Mucosa of descending colon (tissue), 3 donors: ENCODE measurements at regions of chr7 and their contacts with region 1.

Region 1: GRCh38 chr7:116809636-116810266 is 52.6 kb upstream of the CAPZA2 start:
- DNase-seq: peak in 1 of 3 donors; percentile 72
- ATAC-seq: peak; percentile 74
- H3K4me3 ChIP-seq: no peak overlapping the region
- H3K4me1 ChIP-seq: peaks cover 25% of the 10 kb centered on the region
- CTCF ChIP-seq: peak; percentile 37

Region 2: DNA sequence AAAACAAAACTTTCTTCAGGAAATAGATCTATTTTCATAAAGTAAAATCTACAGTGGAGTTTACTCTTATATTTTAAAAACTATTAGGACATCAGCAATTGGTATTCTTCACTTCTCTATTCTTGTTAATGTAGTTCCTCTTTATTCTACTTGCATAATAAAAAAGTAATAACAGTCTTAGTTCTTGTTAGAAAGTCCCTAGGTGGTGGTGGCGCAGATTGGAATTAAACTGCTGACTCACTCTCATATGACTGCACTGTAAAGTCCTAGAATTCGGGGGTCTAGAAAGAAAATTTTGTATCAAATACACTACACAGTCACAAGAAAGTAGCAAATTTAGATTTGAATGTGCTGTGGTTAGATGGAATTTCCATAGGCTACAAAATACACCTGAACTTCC is 644.0 kb before region 1 on chr7:
- intact Hi-C with region 1: loop called (anchors 5 kb)
- DNase-seq: no peak
- ATAC-seq: peak; percentile 52
- H3K4me3 ChIP-seq: no peak overlapping the region
- H3K4me1 ChIP-seq: peaks cover 8% of the 10 kb centered on the region
- CTCF ChIP-seq: no peak

Region 3: GRCh38 chr7:116173051-116174028 is 636.4 kb before region 1 on chr7:
- intact Hi-C with region 1: loop called (anchors 5 kb)
- DNase-seq: peak in 1 of 3 donors; percentile 57
- ATAC-seq: peak; percentile 62
- H3K4me3 ChIP-seq: no peak overlapping the region
- H3K4me1 ChIP-seq: peaks cover 8% of the 10 kb centered on the region
- CTCF ChIP-seq: no peak

Region 4: DNA sequence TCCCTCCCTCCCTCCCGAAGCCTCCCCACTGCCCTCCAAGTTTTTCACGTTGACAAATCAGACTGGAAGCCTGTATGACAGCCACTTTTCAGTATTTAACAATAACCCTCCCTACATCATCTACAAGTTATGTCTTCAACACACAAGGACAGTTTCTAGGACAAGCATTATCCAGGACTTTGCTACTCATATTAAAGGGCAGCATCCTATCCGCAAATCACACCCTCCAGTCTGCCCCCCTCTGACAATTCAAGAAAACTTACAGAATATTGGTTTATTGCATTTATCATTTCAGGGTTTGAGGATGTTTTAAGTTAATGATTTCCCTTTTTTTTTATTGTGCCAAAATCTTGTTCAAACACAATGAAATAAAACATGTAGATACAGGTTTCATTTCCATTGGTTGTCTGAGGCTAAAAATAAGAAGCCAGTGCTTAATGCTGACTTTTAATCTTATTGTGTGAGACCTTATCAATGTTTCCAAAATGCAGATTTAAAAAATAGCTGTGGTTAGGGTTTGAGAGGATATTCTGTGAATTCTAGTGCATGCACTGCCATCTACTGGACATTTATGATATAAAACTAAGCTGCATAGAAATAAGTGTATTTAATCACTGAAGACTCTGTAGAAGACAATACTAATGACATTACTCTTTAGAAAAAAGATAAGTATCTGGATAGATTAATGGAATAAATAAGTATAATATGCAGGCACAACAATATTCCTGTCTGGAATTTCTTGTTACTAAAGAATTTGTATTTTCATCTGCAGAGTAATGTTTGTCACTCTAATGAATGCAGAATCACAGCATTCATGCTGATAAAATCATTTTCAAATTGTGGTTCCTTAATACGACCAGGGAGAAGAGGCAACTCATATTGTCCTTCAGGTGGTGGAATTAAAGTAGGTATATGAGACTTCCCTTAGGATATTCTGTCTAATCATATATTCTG is 220.8 kb before region 1 on chr7:
- intact Hi-C with region 1: loop called (anchors 5 kb)
- DNase-seq: peak in 1 of 3 donors; percentile 22
- ATAC-seq: peak; percentile 27
- H3K4me3 ChIP-seq: no peak overlapping the region
- H3K4me1 ChIP-seq: peaks cover 12% of the 10 kb centered on the region
- CTCF ChIP-seq: peak; percentile 29

Region 5: DNA sequence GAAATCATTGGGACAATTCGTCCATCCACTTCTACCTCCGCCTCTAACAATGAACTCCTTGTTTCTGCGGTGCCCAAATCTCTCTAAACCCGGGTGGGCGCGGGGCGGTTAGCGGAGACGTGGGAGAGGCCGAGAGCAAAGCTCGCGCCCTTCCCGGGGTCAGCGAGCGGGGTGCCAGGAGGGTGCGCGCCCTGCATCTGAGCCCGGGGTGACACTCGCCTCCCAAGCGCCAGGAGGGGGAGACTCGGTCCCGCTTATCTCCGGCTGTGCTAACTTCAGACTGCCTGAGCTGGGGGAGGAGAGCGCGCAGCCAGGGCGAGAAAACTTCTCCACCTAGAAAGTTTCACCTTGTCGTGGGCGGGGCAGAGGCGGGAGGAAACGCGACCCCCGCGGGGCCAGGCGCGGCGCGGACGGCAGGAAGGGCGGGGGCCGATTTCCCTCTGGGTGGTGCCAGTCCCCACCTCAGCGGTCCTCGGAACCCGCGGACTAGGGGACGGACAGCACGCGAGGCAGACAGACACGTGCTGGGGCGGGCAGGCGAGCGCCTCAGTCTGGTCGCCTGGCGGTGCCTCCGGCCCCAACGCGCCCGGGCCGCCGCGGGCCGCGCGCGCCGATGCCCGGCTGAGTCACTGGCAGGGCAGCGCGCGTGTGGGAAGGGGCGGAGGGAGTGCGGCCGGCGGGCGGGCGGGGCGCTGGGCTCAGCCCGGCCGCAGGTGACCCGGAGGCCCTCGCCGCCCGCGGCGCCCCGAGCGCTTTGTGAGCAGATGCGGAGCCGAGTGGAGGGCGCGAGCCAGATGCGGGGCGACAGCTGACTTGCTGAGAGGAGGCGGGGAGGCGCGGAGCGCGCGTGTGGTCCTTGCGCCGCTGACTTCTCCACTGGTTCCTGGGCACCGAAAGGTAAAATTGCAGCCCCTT is 137.8 kb before region 1 on chr7 and contains the start of gene MET:
- intact Hi-C with region 1: loop called in 1 of 2 experiments (anchors 5 kb)
- DNase-seq: peak; percentile 85 to 88 (median 86)
- ATAC-seq: peak; percentile 96
- H3K4me3 ChIP-seq: peak within 1 kb of the TSS; percentile 35
- H3K4me1 ChIP-seq: no peaks in the 10 kb centered on the region
- CTCF ChIP-seq: peak; percentile 5
- total RNA-seq, gene MET: 15.6 to 35.1 (median 31.0) TPM